Activated CD8-positive, alpha-beta T cell treated with anti-CD3 and anti-CD28 coated beads, Interleukin-2, amount 10 ng/mL, durations not matched to agents 7 days and 5 days (primary cell): ENCODE measurements at regions of chrX and their contacts with region 1.

Region 1: GRCh38 chrX:44872817-44873414 is at the start of gene KDM6A:
- DNase-seq: peak; percentile 96
- ATAC-seq: peak; percentile 88
- H3K4me3 Mint-ChIP-seq: peak within 1 kb of the TSS; percentile 96
- H3K27ac Mint-ChIP-seq: peak within 1 kb of the TSS; percentile 99
- H3K4me1 Mint-ChIP-seq: peaks cover 12% of the 10 kb centered on the region
- H3K27me3 Mint-ChIP-seq: no peaks in the 10 kb centered on the region
- total RNA-seq, gene KDM6A: 24.5 to 24.7 TPM

Region 2: DNA sequence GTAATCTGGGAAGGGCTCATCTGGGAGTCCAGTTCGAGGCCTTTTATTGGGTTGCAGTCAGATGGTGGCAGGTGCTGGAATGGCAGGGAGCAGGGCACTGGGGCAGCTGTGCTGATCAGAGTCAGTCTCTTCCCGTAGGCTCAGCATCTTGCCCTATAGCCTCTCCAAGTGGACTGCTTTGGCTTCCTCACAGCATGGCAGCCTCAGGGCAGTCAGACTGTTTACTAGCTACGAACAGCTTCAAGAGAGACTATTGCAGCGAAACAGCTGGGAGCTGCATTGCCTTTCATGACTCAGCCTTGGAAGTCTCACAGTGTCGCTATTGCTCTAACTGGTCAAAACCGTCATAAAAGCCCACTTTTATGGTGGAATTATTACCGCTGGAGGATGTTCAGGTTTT is 55.9 kb before region 1 on chrX:
- CTCF ChIA-PET with region 1: no interaction called
- POLR2A ChIA-PET with region 1: no interaction called
- DNase-seq: no peak
- ATAC-seq: no peak
- H3K4me3 Mint-ChIP-seq: no peak overlapping the region
- H3K27ac Mint-ChIP-seq: no peak overlapping the region
- H3K4me1 Mint-ChIP-seq: no peaks in the 10 kb centered on the region
- H3K27me3 Mint-ChIP-seq: no peaks in the 10 kb centered on the region

Region 3: GRCh38 chrX:44884944-44885343 is 12.0 kb after region 1 on chrX:
- CTCF ChIA-PET with region 1: no interaction called
- POLR2A ChIA-PET with region 1: no interaction called
- DNase-seq: no peak
- ATAC-seq: no peak
- H3K4me3 Mint-ChIP-seq: no peak overlapping the region
- H3K27ac Mint-ChIP-seq: no peak overlapping the region
- H3K4me1 Mint-ChIP-seq: peaks cover 5% of the 10 kb centered on the region
- H3K27me3 Mint-ChIP-seq: no peaks in the 10 kb centered on the region

Region 4: GRCh38 chrX:44898411-44899221 is 25.7 kb after region 1 on chrX:
- CTCF ChIA-PET with region 1: no interaction called
- POLR2A ChIA-PET with region 1: interaction called, 13 read pairs
- DNase-seq: peak; percentile 19
- ATAC-seq: peak; percentile 54
- H3K4me3 Mint-ChIP-seq: no peak overlapping the region
- H3K27ac Mint-ChIP-seq: peak overlapping the region; percentile 79
- H3K4me1 Mint-ChIP-seq: peaks cover 41% of the 10 kb centered on the region
- H3K27me3 Mint-ChIP-seq: no peaks in the 10 kb centered on the region